ENCODE measurements at regions of chr12 and their contacts with region 1.

Region 1: GRCh38 chr12:28535216-28535615 is 345.0 kb downstream of the CCDC91 start:
- DNase-seq: no peak
- H3K4me3 Mint-ChIP-seq: no peak overlapping the region
- H3K27ac Mint-ChIP-seq: no peak overlapping the region
- H3K4me1 Mint-ChIP-seq: peaks cover 10% of the 10 kb centered on the region
- H3K27me3 Mint-ChIP-seq: no peaks in the 10 kb centered on the region

Region 2: GRCh38 chr12:28057856-28058615 is 477.2 kb before region 1 on chr12:
- intact Hi-C with region 1: no loop called
- DNase-seq: no peak
- H3K4me3 Mint-ChIP-seq: no peak overlapping the region
- H3K27ac Mint-ChIP-seq: no peak overlapping the region
- H3K4me1 Mint-ChIP-seq: no peaks in the 10 kb centered on the region
- H3K27me3 Mint-ChIP-seq: peaks cover 9% of the 10 kb centered on the region

Region 3: GRCh38 chr12:28497889-28498411 is 37.3 kb before region 1 on chr12:
- intact Hi-C with region 1: loop called (anchors 5 kb)
- DNase-seq: no peak
- H3K4me3 Mint-ChIP-seq: no peak overlapping the region
- H3K27ac Mint-ChIP-seq: no peak overlapping the region
- H3K4me1 Mint-ChIP-seq: peaks cover 7% of the 10 kb centered on the region
- H3K27me3 Mint-ChIP-seq: no peaks in the 10 kb centered on the region

Region 4: DNA sequence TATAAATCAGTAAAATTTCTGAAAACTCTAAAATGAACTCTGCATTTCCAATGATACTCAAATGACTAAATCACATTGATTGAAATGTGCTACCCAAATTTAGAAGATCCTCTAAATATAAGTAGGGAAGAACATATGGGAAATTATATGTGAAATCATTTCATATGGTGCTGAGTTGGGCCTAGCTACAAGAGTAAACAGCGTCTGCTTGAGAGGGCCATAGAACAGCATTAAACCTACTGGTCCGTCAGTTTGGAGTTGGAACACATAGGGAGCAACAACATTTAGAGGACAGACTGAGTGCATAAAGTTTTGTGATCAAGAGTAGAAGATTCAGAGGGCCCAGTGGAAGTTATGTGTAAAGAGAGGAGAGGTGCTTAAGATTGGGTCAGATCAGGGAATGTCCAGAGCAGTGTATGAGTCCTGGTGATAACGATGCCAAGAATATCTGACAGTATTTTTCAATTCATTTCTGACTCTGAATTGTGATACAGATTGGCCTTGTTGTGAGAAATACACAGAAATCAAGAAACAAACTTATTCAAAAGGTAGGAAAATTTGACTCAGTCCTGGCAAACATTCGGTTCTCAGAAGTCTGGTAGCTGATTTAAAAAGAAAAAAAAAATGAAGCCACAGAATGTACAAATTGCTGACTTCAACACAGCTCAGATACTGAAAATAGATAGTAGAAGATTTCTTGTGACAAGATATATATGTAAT is 17.2 kb after region 1 on chr12:
- intact Hi-C with region 1: loop called (anchors 2 kb)
- DNase-seq: no peak
- H3K4me3 Mint-ChIP-seq: no peak overlapping the region
- H3K27ac Mint-ChIP-seq: peak overlapping the region; percentile 26
- H3K4me1 Mint-ChIP-seq: peaks cover 6% of the 10 kb centered on the region
- H3K27me3 Mint-ChIP-seq: peaks cover 1% of the 10 kb centered on the region